Activated T-helper 1 cell treated with anti-CD3 and anti-CD28 coated beads, Interleukin-12 subunit alpha, Interleukin-12 subunit beta, Interleukin-2, Interleukin-4 antibody, amounts not matched to agents 30 ng/mL and 10 ng/mL and 1 ng/mL, durations not matched to agents 14 hours and 24 hours and 36 hours (primary cell): ENCODE measurements at regions of chr7 and their contacts with region 1.

Region 1: DNA sequence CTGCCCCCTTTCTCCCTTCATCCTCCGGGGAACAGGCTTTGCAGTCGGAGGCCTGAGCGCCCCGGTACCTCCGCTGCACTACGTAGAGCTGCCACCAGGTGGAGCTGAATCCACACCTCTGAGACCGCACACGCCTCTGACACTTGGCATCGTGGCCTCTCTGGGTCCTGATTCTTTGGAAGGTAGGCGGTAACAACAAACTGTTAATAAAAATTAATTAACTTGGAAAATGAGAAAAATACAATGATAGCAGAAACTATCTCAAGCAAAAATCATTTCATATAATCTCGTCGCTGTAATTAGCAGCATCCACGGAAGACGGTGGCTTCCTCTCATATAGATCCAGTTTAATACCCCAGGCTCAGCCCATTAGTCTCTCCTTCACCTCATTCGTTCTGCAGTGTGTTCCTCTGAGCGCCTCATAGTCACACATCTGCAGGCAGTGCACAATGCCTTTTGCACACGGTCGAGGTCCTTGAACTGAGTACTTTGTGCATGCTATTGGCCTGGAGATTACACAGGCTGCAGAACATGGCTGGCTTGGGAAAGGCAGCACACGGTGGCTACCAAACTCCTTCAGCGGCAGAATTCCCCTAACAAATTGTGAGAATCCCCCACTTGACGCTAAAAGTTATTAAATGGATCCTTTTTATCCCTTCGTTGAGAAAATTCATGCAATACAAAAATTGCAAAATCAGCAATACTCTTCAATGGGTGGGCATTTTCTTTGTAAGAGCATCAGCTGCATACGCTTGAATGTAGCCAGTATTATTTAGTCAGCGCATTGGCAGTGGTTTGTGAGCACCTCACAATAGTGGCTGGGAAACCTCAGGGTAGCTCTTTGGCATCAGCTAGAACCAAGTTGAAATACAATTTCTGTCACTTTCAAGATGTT is 18.7 kb downstream of the OR9A2 start:
- DNase-seq: peak; percentile 68
- H3K4me3 Mint-ChIP-seq: no peak overlapping the region
- H3K27ac Mint-ChIP-seq: no peak overlapping the region
- H3K4me1 Mint-ChIP-seq: peaks cover 5% of the 10 kb centered on the region
- H3K27me3 Mint-ChIP-seq: peaks cover 12% of the 10 kb centered on the region

Region 2: DNA sequence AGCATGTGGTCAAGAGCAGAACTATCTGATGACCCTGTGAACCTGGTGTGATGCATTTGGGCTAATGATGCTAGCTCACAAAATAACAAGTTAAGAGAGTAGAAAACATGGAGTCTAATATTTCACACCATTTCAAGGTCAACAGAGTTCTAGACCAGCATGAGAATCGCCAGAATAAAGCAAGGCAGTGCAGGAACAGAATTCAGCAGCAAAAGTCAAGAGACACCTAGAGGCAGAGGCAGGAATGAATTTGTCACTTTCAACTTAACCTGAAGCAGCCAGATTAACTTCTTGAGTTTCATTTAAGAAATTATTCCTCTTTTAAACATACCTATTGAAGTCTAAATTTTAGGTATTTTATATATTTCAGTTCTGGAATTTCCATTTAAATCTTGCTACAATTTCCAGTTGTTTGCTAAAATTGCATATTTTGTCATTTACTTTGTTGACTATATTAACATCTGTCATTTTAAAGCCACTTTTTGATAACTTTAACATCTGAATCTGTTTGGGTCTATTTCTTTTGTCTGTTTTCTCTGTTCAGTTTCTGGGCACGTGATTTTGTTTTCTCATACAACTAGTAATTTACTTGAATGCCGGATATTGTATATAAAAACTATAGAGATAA is 706.2 kb before region 1 on chr7:
- intact Hi-C with region 1: loop called (anchors 1 kb)
- DNase-seq: no peak
- H3K4me3 Mint-ChIP-seq: no peak overlapping the region
- H3K27ac Mint-ChIP-seq: no peak overlapping the region
- H3K4me1 Mint-ChIP-seq: peaks cover 10% of the 10 kb centered on the region
- H3K27me3 Mint-ChIP-seq: peaks cover 7% of the 10 kb centered on the region

Region 3: DNA sequence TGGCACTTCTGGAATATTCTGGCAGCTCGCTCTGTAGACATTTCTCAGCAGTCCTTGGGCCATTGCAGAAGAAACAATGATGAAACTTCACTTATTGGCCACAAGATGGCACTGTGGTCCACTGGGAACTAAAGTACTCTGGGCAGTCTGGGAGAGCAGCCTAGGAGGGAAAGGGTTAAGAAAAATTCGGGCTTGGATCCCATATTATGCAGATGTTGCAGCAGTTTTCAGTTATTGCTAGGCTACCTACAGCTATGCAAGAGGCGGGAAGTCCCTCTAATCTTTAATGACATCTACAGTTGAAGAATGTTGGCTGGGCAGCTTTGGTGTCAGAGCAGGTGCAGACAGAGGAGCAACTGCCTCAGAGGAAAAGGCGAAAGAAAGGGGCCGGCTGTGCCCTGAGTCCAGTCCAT is 548.7 kb before region 1 on chr7:
- intact Hi-C with region 1: loop called (anchors 5 kb)
- DNase-seq: no peak
- H3K4me3 Mint-ChIP-seq: no peak overlapping the region
- H3K27ac Mint-ChIP-seq: peak overlapping the region; percentile 34
- H3K4me1 Mint-ChIP-seq: peaks cover 56% of the 10 kb centered on the region
- H3K27me3 Mint-ChIP-seq: peaks cover 9% of the 10 kb centered on the region

Region 4: DNA sequence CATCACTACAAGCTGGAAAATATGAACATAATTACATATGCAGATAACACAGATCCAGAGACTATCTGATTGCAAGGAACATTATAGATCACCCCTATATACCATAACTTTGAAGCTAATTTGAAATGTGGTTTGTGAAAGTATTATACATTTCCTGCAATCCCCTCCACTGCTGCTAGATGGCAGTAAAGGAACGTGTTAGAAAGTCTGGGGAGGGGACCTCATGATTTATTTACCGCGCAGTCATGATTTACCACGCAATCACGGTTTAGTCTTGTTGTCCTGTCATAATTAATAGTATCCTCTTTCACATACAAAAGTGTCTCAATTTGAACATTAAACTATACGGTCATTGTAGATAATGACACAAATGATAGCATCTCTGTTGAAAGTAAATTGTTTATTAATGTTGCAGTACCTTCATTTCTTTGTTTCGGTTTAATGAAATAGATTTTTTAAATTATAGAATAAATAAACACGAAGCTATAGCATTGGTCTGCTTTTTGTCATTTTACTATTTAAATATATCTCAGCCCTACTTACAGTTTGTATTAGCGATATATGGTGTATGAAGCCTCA is 404.3 kb before region 1 on chr7:
- intact Hi-C with region 1: loop called (anchors 1 kb)
- DNase-seq: no peak
- H3K4me3 Mint-ChIP-seq: no peak overlapping the region
- H3K27ac Mint-ChIP-seq: no peak overlapping the region
- H3K4me1 Mint-ChIP-seq: peaks cover 9% of the 10 kb centered on the region
- H3K27me3 Mint-ChIP-seq: peaks cover 6% of the 10 kb centered on the region

Region 5: GRCh38 chr7:142880876-142881505 is 127.3 kb before region 1 on chr7:
- intact Hi-C with region 1: loop called (anchors 1 kb)
- DNase-seq: peak; percentile 24
- H3K4me3 Mint-ChIP-seq: no peak overlapping the region
- H3K27ac Mint-ChIP-seq: no peak overlapping the region
- H3K4me1 Mint-ChIP-seq: no peaks in the 10 kb centered on the region
- H3K27me3 Mint-ChIP-seq: peaks cover 19% of the 10 kb centered on the region

Region 6: GRCh38 chr7:143416565-143417149 is 408.4 kb after region 1 on chr7:
- intact Hi-C with region 1: loop called (anchors 2 kb)
- DNase-seq: no peak
- H3K4me3 Mint-ChIP-seq: no peak overlapping the region
- H3K27ac Mint-ChIP-seq: no peak overlapping the region
- H3K4me1 Mint-ChIP-seq: peaks cover 4% of the 10 kb centered on the region
- H3K27me3 Mint-ChIP-seq: peaks cover 20% of the 10 kb centered on the region